CD14-positive monocyte (primary cell): ENCODE measurements at regions of chr2 and their contacts with region 1.

Region 1: DNA sequence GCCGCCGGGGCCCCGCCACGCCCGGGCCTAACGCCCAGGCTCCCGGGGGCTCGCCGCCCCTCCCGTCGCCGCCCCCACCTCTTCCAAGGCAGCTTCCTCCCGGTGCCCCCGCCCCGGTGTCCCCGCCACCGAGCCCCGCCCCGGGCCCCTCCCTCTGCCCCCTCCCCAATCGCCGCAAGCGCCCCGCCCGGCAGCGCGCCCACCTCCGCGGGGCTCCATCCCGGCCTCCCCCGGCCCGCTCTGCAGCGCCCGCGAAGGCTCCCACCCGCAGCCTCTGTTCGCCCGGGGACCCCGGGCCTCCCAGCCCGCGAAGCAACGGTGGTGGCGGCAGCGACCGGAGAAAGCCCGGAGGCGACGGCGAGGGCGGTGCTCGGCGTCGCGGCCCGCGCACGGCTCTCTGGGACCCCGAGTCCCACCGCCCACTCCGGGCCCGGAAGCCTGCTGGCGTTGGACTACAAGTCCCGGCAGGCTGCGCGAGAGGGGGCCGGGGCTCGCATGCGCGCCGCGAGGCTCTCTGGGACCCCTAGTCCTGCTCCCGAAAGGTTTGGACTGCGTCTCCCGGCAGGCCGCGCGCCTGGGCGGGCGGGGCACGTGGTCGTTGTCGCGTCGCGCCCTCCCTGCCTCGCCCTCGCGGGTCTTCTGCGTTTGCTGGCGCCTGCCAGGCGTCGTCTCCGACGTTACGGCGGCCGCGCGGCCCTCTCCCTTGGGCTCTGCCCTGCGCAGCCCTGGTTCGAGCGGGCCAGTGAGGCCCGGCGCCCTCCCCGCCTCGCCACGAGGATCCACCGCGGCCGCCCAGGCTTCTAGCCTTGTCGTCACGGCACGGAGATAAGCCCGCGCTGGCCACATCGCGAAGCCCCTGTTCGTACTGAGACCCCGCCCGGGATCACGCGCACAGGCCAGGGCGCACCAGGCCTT is at the start of gene STK25:
- DNase-seq: peak; percentile 89 to 94 (median 94)
- H3K4me3 ChIP-seq: peak within 1 kb of the TSS; percentile 51 to 87 (median 81)
- H3K4me3 Mint-ChIP-seq: peak within 1 kb of the TSS; percentile 81 to 89
- H3K27ac ChIP-seq: peak within 1 kb of the TSS in 1 of 2 donors; percentile 65
- H3K27ac Mint-ChIP-seq: peak within 1 kb of the TSS in 3 of 7 donors; percentile 40 to 86 (median 41)
- H3K4me1 ChIP-seq: peaks cover 17 to 19% of the 10 kb centered on the region in 2 donors
- H3K4me1 Mint-ChIP-seq: peaks cover 23% of the 10 kb centered on the region
- H3K27me3 ChIP-seq: peaks cover 0 to 20% of the 10 kb centered on the region in 2 donors
- H3K27me3 Mint-ChIP-seq: peaks cover 26 to 35% (median 27%) of the 10 kb centered on the region in 3 donors
- CTCF ChIP-seq: peak; percentile 48
- polyA plus RNA-seq, gene STK25: 62.7 to 215 (median 69.5) TPM

Region 2: DNA sequence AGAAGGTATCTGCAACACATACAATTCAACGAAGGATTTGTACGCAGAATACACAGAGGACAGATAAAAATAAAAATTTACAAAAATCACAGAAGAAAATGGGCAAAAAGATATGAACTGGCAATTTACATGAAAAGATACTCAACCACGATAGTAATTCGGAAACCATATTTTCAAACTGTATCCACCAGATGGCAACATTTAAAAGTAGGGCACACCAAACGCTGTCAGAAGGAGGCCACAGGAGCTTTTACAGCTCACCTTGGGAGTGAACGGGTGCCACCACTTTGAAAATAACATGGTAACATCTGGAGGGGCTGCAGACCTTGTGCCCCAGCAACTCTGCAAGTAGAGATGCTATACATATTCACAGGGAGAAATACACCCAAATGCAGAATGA is 698.3 kb before region 1 on chr2:
- intact Hi-C with region 1: no loop called
- DNase-seq: no peak
- H3K4me3 ChIP-seq: no peak overlapping the region
- H3K4me3 Mint-ChIP-seq: no peak overlapping the region
- H3K27ac ChIP-seq: no peak overlapping the region
- H3K27ac Mint-ChIP-seq: no peak overlapping the region
- H3K4me1 ChIP-seq: no peaks in the 10 kb centered on the region
- H3K4me1 Mint-ChIP-seq: no peaks in the 10 kb centered on the region
- H3K27me3 ChIP-seq: peaks cover 4 to 7% of the 10 kb centered on the region in 2 donors
- H3K27me3 Mint-ChIP-seq: peaks cover 20 to 32% (median 20%) of the 10 kb centered on the region in 3 donors
- CTCF ChIP-seq: no peak

Region 3: DNA sequence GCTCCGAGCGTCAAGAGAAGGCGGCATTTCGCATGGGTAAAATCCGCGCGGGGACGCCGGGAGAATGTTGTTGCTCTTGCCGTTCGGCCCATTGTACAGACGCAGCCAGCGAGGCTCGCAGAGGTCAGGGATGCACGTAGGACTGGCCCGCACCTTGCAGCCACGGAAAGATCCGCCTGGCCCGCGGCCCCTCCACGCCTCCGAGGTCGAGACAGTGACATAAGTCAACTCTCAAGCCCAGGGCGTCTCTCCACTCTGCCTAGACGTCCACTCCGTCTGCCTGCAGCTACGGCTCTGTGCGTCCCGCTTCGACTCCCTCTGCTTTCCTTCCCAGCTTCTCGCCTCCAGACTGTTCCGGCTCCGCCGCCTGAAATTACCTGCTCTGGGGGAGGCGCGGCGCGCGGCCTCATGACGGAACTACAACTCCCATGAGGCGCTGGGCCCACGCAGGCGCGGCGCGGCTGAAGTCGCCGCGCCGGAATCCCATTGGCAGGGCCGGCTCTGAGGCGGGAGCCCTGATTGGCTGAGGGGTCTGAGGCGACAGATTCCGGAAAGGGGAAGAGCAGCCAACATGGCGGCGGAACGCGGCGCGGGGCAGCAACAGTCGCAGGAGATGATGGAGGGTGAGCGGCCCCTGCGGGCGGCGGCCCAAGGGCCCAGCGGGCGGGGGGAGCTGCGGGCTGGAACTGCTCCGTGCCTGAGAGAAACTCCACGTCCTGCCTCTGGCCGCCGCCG is 358.4 kb before region 1 on chr2 and contains the start of gene PPP1R7:
- intact Hi-C with region 1: loop called in 1 of 2 experiments (anchors 2 kb)
- DNase-seq: peak; percentile 89 to 92 (median 91)
- H3K4me3 ChIP-seq: peak within 1 kb of the TSS; percentile 56 to 87 (median 83)
- H3K4me3 Mint-ChIP-seq: peak within 1 kb of the TSS; percentile 98 to 99
- H3K27ac ChIP-seq: peak within 1 kb of the TSS in 1 of 2 donors; percentile 74
- H3K27ac Mint-ChIP-seq: peak within 1 kb of the TSS; percentile 73 to 95 (median 85)
- H3K4me1 ChIP-seq: peaks cover 12 to 27% of the 10 kb centered on the region in 2 donors
- H3K4me1 Mint-ChIP-seq: peaks cover 24% of the 10 kb centered on the region
- H3K27me3 ChIP-seq: no peaks in the 10 kb centered on the region
- H3K27me3 Mint-ChIP-seq: peaks cover 0 to 8% (median 2%) of the 10 kb centered on the region in 3 donors
- CTCF ChIP-seq: no peak
- polyA plus RNA-seq, gene PPP1R7: 54.9 to 102 (median 84.4) TPM

Region 4: DNA sequence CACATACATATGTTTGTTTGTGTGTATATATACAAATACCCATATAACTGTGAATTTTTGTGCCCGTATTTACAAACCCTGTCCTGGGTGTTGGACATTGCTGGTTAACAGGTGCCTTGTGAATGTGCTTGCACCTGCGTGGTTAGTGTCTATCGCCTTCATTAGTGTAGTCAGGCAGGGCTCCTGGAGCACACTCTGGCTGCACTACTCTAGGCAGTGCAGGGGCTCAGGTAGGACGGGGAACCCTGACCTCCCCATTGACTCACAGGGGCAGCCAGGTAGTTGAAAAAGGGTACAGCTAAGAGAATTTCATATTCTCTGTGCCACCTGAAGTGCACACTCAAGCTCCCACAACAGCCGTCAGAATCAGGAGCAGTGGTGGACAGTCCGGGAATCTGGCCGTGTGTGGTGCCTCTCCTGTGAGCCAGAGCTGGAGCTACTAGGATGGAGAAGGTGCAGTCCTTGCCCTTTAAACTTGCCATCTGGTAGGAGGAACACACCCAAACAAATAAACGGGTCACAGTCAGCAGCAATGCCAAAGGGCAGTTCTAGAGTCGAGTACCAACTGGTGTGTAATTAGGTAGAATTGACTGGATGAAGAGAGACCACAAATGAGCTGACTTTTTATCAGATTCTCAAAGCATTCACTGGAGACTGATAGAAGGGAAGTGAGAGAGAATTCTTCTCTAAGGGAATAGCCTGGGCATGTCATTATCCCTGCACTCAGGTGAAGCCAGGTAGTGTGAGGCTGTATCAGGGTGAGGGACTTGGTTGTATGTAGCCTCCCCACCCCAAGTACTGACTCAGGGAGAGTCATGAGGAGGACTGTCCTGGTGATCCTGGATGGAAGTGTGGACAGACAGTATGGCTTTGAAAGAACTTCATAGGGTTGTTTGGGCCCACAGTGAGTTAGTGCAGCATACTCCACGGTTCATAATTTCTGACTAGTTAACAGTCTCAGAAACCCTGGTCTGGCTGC is 108.3 kb before region 1 on chr2:
- intact Hi-C with region 1: no loop called
- DNase-seq: no peak
- H3K4me3 ChIP-seq: no peak overlapping the region
- H3K4me3 Mint-ChIP-seq: no peak overlapping the region
- H3K27ac ChIP-seq: no peak overlapping the region
- H3K27ac Mint-ChIP-seq: peak overlapping the region in 1 of 7 donors; percentile 56
- H3K4me1 ChIP-seq: no peaks in the 10 kb centered on the region
- H3K4me1 Mint-ChIP-seq: no peaks in the 10 kb centered on the region
- H3K27me3 ChIP-seq: no peaks in the 10 kb centered on the region
- H3K27me3 Mint-ChIP-seq: peaks cover 0 to 2% (median 0%) of the 10 kb centered on the region in 3 donors
- CTCF ChIP-seq: no peak

Region 5: DNA sequence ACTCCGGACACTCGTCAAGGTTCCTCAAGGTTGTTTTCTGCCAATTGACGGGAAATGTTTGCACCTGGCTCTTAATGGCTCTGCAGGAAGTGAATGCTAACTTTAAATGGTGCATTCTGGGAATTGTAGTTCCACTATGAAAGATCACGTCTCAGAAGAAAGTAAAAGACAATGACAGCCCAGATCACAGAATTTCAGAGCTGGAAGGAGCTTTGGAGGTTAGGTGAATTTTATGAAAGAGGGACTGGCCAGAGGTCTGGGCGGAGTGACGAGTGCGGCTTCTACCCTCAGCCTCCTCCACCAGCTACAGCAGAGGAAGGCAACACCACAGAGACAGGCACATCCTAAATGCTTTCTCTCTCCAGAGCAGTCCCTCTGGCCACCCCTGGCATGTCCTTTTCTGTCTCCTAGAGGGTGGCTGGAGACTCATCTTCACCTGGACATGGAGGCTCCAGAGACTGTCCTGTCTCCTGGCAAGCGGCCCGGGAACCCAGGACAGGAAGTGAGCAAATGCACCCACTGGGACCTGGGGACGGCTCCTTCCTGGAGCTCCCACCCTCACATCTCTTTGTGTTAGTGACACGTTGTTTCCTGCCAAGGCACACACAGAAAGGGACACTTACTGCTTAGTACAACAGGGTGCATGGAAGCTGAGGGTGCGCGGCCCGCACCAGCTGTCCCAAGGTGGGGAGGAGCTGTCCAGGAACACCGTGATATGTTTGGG is 109.1 kb after region 1 on chr2:
- intact Hi-C with region 1: loop called in 1 of 2 experiments (anchors 5 kb)
- DNase-seq: peak; percentile 15 to 25 (median 22)
- H3K4me3 ChIP-seq: peak overlapping the region; percentile 33 to 69 (median 41)
- H3K4me3 Mint-ChIP-seq: peak overlapping the region; percentile 71 to 91
- H3K27ac ChIP-seq: peak overlapping the region in 1 of 2 donors; percentile 34
- H3K27ac Mint-ChIP-seq: peak overlapping the region in 6 of 7 donors; percentile 31 to 88 (median 78)
- H3K4me1 ChIP-seq: peaks cover 10 to 11% of the 10 kb centered on the region in 2 donors
- H3K4me1 Mint-ChIP-seq: peaks cover 16% of the 10 kb centered on the region
- H3K27me3 ChIP-seq: no peaks in the 10 kb centered on the region
- H3K27me3 Mint-ChIP-seq: peaks cover 0 to 2% (median 0%) of the 10 kb centered on the region in 3 donors
- CTCF ChIP-seq: no peak

Region 6: DNA sequence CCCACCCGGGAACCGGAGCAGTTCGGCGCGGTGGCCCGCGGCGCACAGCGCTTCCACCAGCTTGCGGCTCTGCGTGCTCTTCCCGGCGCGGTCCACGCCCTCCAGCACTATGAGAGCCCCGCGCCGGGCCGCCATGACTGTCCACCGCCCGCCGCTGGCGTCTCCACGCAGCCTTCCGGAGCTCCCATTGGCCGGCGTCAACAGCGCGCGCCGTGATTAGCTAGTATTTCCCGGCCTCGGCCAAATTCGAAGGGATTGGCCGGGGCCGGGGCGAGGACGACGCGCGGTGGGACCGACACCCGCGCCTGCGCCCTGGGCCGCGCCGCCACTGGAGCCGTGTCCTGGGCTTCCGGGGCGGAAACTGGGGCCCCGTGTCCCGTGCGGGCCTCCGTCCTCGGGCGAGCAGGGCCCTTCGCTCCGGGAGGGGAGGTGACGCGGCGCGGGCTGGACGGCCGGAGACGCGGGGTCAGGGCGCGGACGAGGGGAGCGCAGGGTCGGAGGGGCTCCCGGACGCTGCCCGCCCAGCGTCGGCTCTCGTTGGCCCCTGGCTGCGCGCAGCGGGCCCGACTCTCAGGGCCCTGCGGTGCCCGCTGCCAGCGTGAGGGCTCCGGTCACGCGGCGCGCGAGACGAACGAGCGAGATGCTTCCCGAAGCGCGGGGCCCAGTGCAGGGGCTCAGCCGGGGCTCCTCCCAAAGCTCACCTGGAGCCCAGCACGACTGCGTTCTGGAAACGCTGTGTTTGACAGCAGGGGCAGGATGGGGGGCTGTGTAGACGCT is 178.3 kb after region 1 on chr2 and contains the start of gene DTYMK:
- intact Hi-C with region 1: loop called in 1 of 2 experiments (anchors 5 kb)
- DNase-seq: peak; percentile 92 to 97 (median 96)
- H3K4me3 ChIP-seq: peak within 1 kb of the TSS; percentile 87 to 92 (median 89)
- H3K4me3 Mint-ChIP-seq: peak within 1 kb of the TSS; percentile 89 to 94
- H3K27ac ChIP-seq: peak within 1 kb of the TSS; percentile 50 to 89
- H3K27ac Mint-ChIP-seq: peak within 1 kb of the TSS; percentile 80 to 96 (median 89)
- H3K4me1 ChIP-seq: peaks cover 20 to 24% of the 10 kb centered on the region in 2 donors
- H3K4me1 Mint-ChIP-seq: peaks cover 25% of the 10 kb centered on the region
- H3K27me3 ChIP-seq: no peaks in the 10 kb centered on the region
- H3K27me3 Mint-ChIP-seq: peaks cover 0 to 1% (median 0%) of the 10 kb centered on the region in 3 donors
- CTCF ChIP-seq: no peak
- polyA plus RNA-seq, gene DTYMK: 13.0 to 23.5 (median 18.7) TPM